ENCODE measurements at regions of chr20 and their contacts with region 1.

Region 1: GRCh38 chr20:17968366-17969279 is at the starts of genes MGME1 and SNX5:
- DNase-seq: peak; percentile 96
- ATAC-seq: peak; percentile 84
- H3K4me3 ChIP-seq: peak within 1 kb of the TSS; percentile 96
- H3K27ac ChIP-seq: peak within 1 kb of the TSS; percentile 98
- H3K4me1 ChIP-seq: no peaks in the 10 kb centered on the region; the same call in 1 of the 2 replicates
- H3K27me3 ChIP-seq: no peaks in the 10 kb centered on the region
- CTCF ChIP-seq: no peak
- EP300 ChIP-seq: 0 out of 4 replicates have a peak, but pooled peaks of 1 of the 2 experiments have one; percentile 49
- POLR2A ChIP-seq: peak; percentile 98
- RAD21 ChIP-seq: no peak
- polyA plus RNA-seq, gene MGME1: 13.4 to 14.1 TPM
- polyA plus RNA-seq, gene SNX5: 92.9 to 152 TPM

Region 2: DNA sequence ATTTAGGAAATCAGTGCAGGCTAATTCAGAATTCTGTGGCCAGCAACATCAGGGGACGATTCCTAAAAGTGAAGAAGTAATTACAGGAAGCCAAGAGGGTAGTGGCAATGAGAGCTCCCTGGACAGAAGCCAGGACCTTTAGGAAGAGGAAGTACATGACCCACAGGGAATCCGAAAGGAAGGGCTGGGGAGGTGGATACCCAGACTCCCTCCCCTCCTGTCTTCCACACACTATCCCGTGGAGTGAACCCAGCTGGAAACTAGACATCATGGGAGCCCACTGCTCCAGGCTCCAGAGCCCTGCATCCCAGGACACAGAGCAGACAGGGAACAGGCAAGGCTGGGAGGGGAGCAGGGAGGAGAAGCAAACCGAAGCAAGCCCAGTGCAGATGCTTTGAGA is 83.1 kb before region 1 on chr20:
- CTCF ChIA-PET with region 1: no interaction called
- POLR2A ChIA-PET with region 1: no interaction called
- RAD21 ChIA-PET with region 1: no interaction called
- SMC1A ChIA-PET with region 1: no interaction called
- in situ Hi-C with region 1: no loop called
- intact Hi-C with region 1: no loop called
- DNase-seq: no peak
- ATAC-seq: no peak
- H3K4me3 ChIP-seq: no peak overlapping the region
- H3K27ac ChIP-seq: no peak overlapping the region
- H3K4me1 ChIP-seq: no peaks in the 10 kb centered on the region
- H3K27me3 ChIP-seq: no peaks in the 10 kb centered on the region
- CTCF ChIP-seq: no peak
- EP300 ChIP-seq: no peak
- POLR2A ChIP-seq: no peak
- RAD21 ChIP-seq: no peak

Region 3: GRCh38 chr20:17952692-17953684 is 15.6 kb before region 1 on chr20:
- CTCF ChIA-PET with region 1: interaction called, 88 read pairs
- POLR2A ChIA-PET with region 1: interaction called, 74 read pairs
- RAD21 ChIA-PET with region 1: interaction called, 31 read pairs
- SMC1A ChIA-PET with region 1: interaction called, 41 read pairs
- in situ Hi-C with region 1: no loop called
- intact Hi-C with region 1: no loop called
- DNase-seq: no peak
- ATAC-seq: no peak
- H3K4me3 ChIP-seq: no peak overlapping the region
- H3K27ac ChIP-seq: no peak overlapping the region
- H3K4me1 ChIP-seq: peaks cover 27% of the 10 kb centered on the region
- H3K27me3 ChIP-seq: no peaks in the 10 kb centered on the region
- CTCF ChIP-seq: no peak
- EP300 ChIP-seq: no peak
- POLR2A ChIP-seq: no peak
- RAD21 ChIP-seq: no peak

Region 4: GRCh38 chr20:17958373-17959256 is 10.0 kb before region 1 on chr20:
- CTCF ChIA-PET with region 1: interaction called, 88 read pairs
- POLR2A ChIA-PET with region 1: interaction called, 74 read pairs
- RAD21 ChIA-PET with region 1: interaction called, 31 read pairs
- SMC1A ChIA-PET with region 1: interaction called, 41 read pairs
- in situ Hi-C with region 1: no loop called
- intact Hi-C with region 1: no loop called
- DNase-seq: no peak
- ATAC-seq: peak; percentile 2; the same call in 2 of the 3 replicates
- H3K4me3 ChIP-seq: peak overlapping the region; percentile 86; the same call in 1 of the 2 replicates
- H3K27ac ChIP-seq: peak overlapping the region; percentile 54
- H3K4me1 ChIP-seq: peaks cover 48% of the 10 kb centered on the region
- H3K27me3 ChIP-seq: no peaks in the 10 kb centered on the region
- CTCF ChIP-seq: no peak
- EP300 ChIP-seq: no peak
- POLR2A ChIP-seq: no peak
- RAD21 ChIP-seq: no peak

Region 5: GRCh38 chr20:17995967-17996819 is 27.6 kb after region 1 on chr20:
- CTCF ChIA-PET with region 1: interaction called, 14 read pairs
- POLR2A ChIA-PET with region 1: interaction called, 5 read pairs
- RAD21 ChIA-PET with region 1: interaction called, 14 read pairs
- SMC1A ChIA-PET with region 1: interaction called, 12 read pairs
- in situ Hi-C with region 1: no loop called
- intact Hi-C with region 1: loop called (anchors 2 kb)
- DNase-seq: no peak
- ATAC-seq: peak; percentile 61
- H3K4me3 ChIP-seq: no peak overlapping the region
- H3K27ac ChIP-seq: no peak overlapping the region
- H3K4me1 ChIP-seq: peaks cover 21% of the 10 kb centered on the region
- H3K27me3 ChIP-seq: no peaks in the 10 kb centered on the region
- CTCF ChIP-seq: peak; percentile 97 to 99 (median 98)
- EP300 ChIP-seq: no peak
- POLR2A ChIP-seq: no peak
- RAD21 ChIP-seq: peak; percentile 99

Region 6: DNA sequence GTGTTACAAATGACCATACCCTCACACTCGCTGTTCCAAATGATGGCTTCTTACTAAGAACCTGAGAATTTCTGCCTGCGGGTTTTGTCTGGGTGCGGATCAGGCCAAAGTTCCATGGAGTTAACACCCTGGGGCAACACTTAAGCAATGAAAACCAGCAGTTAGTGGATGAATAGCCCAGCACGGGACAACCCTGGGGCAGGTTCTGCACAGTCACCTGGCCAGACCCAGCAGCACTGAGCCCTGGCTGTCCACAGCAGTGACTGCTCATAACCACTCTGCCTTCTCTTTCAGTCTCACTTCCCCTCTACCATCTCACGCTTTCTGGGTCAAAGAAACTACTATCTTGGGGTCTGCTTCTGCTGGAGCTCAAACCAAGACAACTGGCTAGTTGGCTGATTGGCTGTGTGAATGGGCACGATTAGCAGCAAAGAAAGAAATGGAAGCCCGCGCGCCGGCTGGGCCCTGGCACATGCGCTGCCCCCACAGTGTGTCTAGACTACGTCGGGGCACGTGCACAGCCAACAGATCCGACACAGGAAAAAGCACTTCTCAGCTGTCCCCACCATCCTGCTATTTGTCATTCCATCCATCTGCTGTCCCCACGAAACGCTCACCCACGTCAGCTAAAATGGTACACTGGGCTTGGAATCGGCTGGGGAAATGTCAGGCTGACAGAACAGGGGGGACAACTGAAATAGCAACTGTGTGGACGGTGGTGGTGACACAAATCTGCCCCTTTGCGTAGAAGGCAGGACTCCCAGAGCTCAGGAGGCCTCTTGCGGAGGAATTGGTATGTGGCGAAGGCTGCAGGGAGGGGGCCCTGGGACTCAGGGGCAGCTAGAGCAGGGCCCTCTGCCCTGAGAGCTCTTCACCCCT is 36.8 kb after region 1 on chr20:
- CTCF ChIA-PET with region 1: interaction called, 4 read pairs
- POLR2A ChIA-PET with region 1: interaction called, 9 read pairs
- RAD21 ChIA-PET with region 1: interaction called, 15 read pairs
- SMC1A ChIA-PET with region 1: interaction called, 18 read pairs
- in situ Hi-C with region 1: no loop called
- intact Hi-C with region 1: no loop called
- DNase-seq: peak; percentile 66
- ATAC-seq: peak; percentile 97
- H3K4me3 ChIP-seq: no peak overlapping the region
- H3K27ac ChIP-seq: peak overlapping the region; percentile 82
- H3K4me1 ChIP-seq: peaks cover 31% of the 10 kb centered on the region
- H3K27me3 ChIP-seq: no peaks in the 10 kb centered on the region
- CTCF ChIP-seq: no peak
- EP300 ChIP-seq: peak; percentile 78 to 88
- POLR2A ChIP-seq: peak; percentile 60
- RAD21 ChIP-seq: no peak

Measured in GM12878 (cell line).